IMR-90 (cell line): ENCODE measurements at regions of chr11 and their contacts with region 1.

Region 1: GRCh38 chr11:123314972-123315371 is 115.1 kb upstream of the GRAMD1B start:
- DNase-seq: no peak
- ATAC-seq: no peak
- H3K4me3 ChIP-seq: no peak overlapping the region
- H3K27ac ChIP-seq: no peak overlapping the region
- H3K4me1 ChIP-seq: no peaks in the 10 kb centered on the region
- H3K27me3 ChIP-seq: peaks cover 25% of the 10 kb centered on the region
- CTCF ChIP-seq: no peak
- POLR2A ChIP-seq: no peak
- RAD21 ChIP-seq: no peak

Region 2: GRCh38 chr11:123264431-123264780 is 50.6 kb before region 1 on chr11:
- CTCF ChIA-PET with region 1: no interaction called
- POLR2A ChIA-PET with region 1: no interaction called
- dilution Hi-C with region 1: no loop called
- in situ Hi-C with region 1: no loop called
- intact Hi-C with region 1: no loop called
- DNase-seq: no peak
- ATAC-seq: no peak
- H3K4me3 ChIP-seq: no peak overlapping the region
- H3K27ac ChIP-seq: no peak overlapping the region
- H3K4me1 ChIP-seq: peaks cover 3% of the 10 kb centered on the region
- H3K27me3 ChIP-seq: peaks cover 13% of the 10 kb centered on the region
- CTCF ChIP-seq: no peak
- POLR2A ChIP-seq: no peak
- RAD21 ChIP-seq: no peak

Region 3: DNA sequence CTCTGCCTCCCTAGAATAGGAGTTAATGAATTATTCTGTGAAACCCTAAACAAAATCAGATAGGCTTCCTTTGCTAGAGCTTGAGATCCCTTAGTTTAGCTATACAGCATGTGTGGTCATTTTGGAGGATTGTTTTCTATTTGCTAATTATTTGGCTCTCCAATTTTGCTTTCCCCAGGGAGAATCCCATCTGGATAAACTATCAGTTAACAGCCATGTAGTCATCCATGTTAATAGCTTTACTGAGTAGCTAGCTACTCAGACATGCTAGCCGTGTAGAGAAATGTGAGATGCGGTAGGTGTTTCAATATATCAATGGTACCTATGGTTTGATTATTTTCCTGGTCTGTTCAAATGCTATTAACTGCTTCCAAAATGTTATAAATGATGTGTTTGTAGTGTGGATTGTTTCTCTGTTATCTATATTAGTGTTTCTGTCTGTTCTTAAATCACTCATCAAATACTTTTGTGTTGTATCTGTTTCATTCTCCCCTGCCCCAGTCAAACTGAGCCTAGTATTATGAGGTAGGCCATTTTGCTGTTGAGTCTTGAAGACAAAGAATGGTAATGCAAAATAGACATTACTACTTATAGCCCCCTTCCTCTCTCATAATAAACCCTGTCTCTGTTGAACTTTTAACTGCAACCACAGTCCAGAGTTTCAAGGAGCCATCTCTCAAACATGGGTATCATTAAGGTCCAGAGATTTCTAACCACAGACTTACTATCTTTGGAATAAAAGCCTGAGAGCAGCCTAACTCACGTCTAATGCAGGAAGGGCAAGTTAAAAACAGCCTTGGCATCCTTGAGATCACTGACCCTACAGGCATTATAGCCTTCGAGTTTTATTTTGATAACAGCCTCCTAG is 59.0 kb after region 1 on chr11:
- CTCF ChIA-PET with region 1: no interaction called
- POLR2A ChIA-PET with region 1: no interaction called
- dilution Hi-C with region 1: no loop called
- in situ Hi-C with region 1: no loop called
- intact Hi-C with region 1: no loop called
- DNase-seq: no peak
- ATAC-seq: no peak
- H3K4me3 ChIP-seq: no peak overlapping the region
- H3K27ac ChIP-seq: no peak overlapping the region
- H3K4me1 ChIP-seq: no peaks in the 10 kb centered on the region
- H3K27me3 ChIP-seq: peaks cover 50% of the 10 kb centered on the region
- CTCF ChIP-seq: no peak
- POLR2A ChIP-seq: no peak
- RAD21 ChIP-seq: no peak

Region 4: GRCh38 chr11:123450623-123451022 is 135.7 kb after region 1 on chr11:
- CTCF ChIA-PET with region 1: no interaction called
- POLR2A ChIA-PET with region 1: interaction called, 15 read pairs
- dilution Hi-C with region 1: no loop called
- in situ Hi-C with region 1: no loop called
- intact Hi-C with region 1: no loop called
- DNase-seq: peak; percentile 91
- ATAC-seq: peak; percentile 37
- H3K4me3 ChIP-seq: no peak overlapping the region
- H3K27ac ChIP-seq: no peak overlapping the region
- H3K4me1 ChIP-seq: peaks cover 7% of the 10 kb centered on the region
- H3K27me3 ChIP-seq: no peaks in the 10 kb centered on the region
- CTCF ChIP-seq: no peak
- POLR2A ChIP-seq: no peak
- RAD21 ChIP-seq: no peak